GM10248 (cell line): ENCODE measurements at regions of chr17 and their contacts with region 1.

Region 1: GRCh38 chr17:2029911-2030778 is at the start of gene DPH1:
- DNase-seq: peak; percentile 92
- CTCF ChIP-seq: no peak

Region 2: DNA sequence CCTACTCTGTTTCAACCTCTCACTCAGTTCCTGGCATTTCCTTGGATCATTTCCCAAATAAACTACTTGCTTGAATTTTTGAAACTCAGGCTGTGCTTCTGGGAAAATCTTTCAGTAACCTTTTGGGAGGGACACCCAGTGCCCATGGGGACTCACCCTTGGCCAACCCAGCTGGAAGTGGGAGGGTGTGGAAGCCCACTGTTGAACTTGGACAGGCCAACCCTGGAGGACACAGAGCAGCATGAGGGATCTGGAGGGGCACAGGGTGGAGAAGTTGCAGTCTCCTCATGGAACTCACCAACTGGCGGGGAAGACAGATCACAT is 16.2 kb before region 1 on chr17:
- CTCF ChIA-PET with region 1: no interaction called
- POLR2A ChIA-PET with region 1: no interaction called
- DNase-seq: no peak
- CTCF ChIP-seq: no peak

Region 3: GRCh38 chr17:2041561-2042366 is 11.6 kb after region 1 on chr17 and contains the start of gene OVCA2:
- CTCF ChIA-PET with region 1: interaction called, 20 read pairs
- POLR2A ChIA-PET with region 1: no interaction called
- DNase-seq: peak; percentile 98
- CTCF ChIP-seq: peak; percentile 68

Region 4: DNA sequence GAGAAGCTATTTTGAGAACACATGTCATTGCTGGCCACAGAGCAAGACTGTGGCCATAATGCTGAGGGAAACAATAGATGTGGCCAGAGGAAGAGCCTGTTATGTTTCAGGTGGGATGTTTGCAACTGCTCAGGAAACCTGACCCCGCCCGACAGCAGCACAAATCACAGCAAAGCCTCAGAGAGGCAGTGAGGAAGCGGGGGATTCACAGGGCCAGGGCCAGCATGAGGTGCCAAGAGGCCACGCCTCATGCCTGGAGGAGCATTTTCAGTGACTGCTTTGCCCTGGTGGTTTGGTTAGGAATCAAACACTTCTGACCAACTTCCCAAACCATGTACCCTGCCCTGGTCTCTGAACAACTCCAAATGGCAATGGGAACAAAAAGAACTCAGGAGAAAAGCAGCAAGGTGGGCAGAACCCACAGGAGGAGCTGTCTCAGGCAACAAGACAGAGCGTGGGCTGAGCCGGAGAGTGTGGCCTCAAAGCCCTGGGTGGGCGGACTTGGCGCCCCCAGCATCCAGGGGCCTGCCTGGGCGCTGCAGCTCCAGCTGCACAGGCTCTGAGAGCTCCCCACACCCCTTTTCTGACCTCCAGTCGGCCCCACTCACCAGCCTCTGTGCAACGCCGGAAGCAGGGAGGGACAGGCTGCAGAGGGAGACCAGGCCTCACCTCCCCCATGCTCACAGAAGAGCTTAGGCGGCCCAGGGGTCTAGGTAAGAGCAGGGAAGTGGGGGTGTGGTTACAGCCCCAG is 45.4 kb after region 1 on chr17:
- CTCF ChIA-PET with region 1: no interaction called
- POLR2A ChIA-PET with region 1: no interaction called
- DNase-seq: peak; percentile 37
- CTCF ChIP-seq: no peak